ENCODE measurements at regions of chr13 and their contacts with region 1.

Region 1: DNA sequence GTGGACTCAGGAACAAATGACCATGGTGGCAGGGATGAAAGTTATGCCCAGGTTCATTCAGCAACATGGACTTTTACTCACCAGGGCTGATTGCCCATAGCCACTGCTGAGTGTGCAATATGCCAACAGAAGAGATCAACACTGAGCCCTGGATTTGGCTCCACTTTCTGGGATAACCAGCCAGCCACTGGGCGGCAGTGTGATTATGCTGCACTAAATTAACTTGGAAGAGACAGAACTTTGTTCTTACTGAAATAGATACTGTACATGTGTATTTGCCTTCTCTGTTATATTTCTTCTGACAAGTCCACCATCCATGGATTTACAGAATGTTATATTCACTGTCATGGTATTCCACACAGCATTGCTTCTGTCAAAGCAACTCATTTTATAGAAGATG is 257.4 kb downstream of the TDRD3 start:
- DNase-seq: peak; percentile 21 to 74 (median 28)
- H3K4me3 ChIP-seq: no peak overlapping the region
- H3K27ac ChIP-seq: no peak overlapping the region
- H3K4me1 ChIP-seq: no peaks in the 10 kb centered on the region
- H3K27me3 ChIP-seq: no peaks in the 10 kb centered on the region
- CTCF ChIP-seq: peak in 5 of 6 experiments; percentile 21 to 33 (median 22)
- POLR2A ChIP-seq: no peak

Region 2: GRCh38 chr13:60182907-60183306 is 471.5 kb before region 1 on chr13:
- intact Hi-C with region 1: no loop called
- DNase-seq: no peak
- H3K4me3 ChIP-seq: no peak overlapping the region
- H3K27ac ChIP-seq: no peak overlapping the region
- H3K4me1 ChIP-seq: no peaks in the 10 kb centered on the region
- H3K27me3 ChIP-seq: no peaks in the 10 kb centered on the region
- CTCF ChIP-seq: no peak
- POLR2A ChIP-seq: no peak

Region 3: DNA sequence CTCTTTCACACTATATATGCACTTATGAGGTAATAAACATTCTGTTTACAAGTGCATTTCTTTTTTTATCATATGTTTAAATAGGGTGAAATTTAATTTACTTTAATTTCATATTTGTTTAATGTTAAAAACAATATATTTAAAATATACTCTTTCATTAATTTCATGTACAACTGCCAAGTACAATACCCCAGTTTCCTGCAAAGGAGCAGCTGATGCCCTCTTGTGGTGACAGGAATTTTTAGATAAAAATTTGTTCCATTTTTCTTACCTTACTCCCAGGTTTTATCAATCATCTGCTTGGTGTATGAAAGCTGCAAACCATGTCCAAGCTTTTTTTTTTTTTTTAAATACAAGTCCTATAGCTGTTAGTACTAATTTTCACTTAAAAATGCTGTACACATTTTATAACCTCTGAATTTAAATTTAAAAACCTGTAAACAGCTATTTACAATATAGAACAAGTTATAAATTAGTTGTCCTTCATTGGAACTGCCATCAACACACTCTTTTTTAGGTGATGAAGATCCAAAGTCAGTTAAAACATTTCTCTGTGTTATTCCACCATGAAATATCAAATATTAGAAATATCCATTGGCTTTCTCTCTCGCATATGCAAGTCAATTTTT is 756.4 kb after region 1 on chr13:
- intact Hi-C with region 1: loop called in 1 of 2 experiments (anchors 10 kb)
- DNase-seq: no peak
- H3K4me3 ChIP-seq: no peak overlapping the region
- H3K27ac ChIP-seq: no peak overlapping the region
- H3K4me1 ChIP-seq: no peaks in the 10 kb centered on the region
- H3K27me3 ChIP-seq: peaks cover 3% of the 10 kb centered on the region
- CTCF ChIP-seq: peak; percentile 3 to 47 (median 24)
- POLR2A ChIP-seq: no peak

Measured in adrenal gland (tissue), 19 donors.